GM12878 (cell line): ENCODE measurements at regions of chr12 and their contacts with region 1.

Region 1: DNA sequence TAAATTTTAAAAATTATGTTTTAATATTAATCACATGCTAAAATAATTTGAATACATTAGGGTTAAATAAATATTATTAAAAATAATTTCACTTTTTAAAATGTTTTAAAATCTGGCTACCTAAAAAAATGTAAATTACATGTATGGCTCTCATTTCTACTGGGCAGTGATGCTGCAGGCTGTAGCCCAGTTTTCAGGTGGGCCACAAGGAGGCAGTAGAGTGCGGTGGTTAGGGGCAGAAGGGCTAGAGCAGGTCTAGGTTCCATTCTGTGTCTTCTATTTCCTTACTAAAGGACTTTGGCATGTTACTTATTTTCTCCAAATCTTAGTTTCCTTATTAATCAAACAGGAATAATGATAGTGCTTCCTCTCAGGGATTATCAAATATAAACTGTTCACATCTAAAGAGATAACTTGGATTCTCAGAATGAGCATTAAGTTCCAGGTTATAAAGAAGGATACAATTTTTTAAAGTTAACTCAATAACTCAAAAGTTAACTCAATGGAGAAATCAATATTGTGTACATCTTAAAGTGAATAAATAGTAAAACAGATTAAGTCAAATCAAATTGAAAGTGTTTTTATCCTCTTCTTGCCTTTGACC is 54.9 kb upstream of the OVCH1 start:
- DNase-seq: no peak
- ATAC-seq: peak; percentile 98
- H3K4me3 ChIP-seq: no peak overlapping the region
- H3K27ac ChIP-seq: no peak overlapping the region
- H3K4me1 ChIP-seq: no peaks in the 10 kb centered on the region
- H3K27me3 ChIP-seq: no peaks in the 10 kb centered on the region
- CTCF ChIP-seq: peak; percentile 84 to 90 (median 87)
- EP300 ChIP-seq: no peak
- POLR2A ChIP-seq: no peak
- RAD21 ChIP-seq: peak; percentile 79

Region 2: GRCh38 chr12:29350080-29350479 is 202.3 kb before region 1 on chr12:
- CTCF ChIA-PET with region 1: no interaction called
- POLR2A ChIA-PET with region 1: no interaction called
- RAD21 ChIA-PET with region 1: no interaction called
- SMC1A ChIA-PET with region 1: no interaction called
- in situ Hi-C with region 1: no loop called
- intact Hi-C with region 1: no loop called
- DNase-seq: no peak
- ATAC-seq: no peak
- H3K4me3 ChIP-seq: no peak overlapping the region
- H3K27ac ChIP-seq: no peak overlapping the region
- H3K4me1 ChIP-seq: no peaks in the 10 kb centered on the region
- H3K27me3 ChIP-seq: no peaks in the 10 kb centered on the region
- CTCF ChIP-seq: no peak
- EP300 ChIP-seq: no peak
- POLR2A ChIP-seq: no peak
- RAD21 ChIP-seq: no peak

Region 3: GRCh38 chr12:29519585-29520182 is 32.7 kb before region 1 on chr12:
- CTCF ChIA-PET with region 1: interaction called, 19 read pairs
- POLR2A ChIA-PET with region 1: no interaction called
- RAD21 ChIA-PET with region 1: interaction called, 10 read pairs
- SMC1A ChIA-PET with region 1: interaction called, 38 read pairs
- in situ Hi-C with region 1: no loop called
- intact Hi-C with region 1: no loop called
- DNase-seq: no peak
- ATAC-seq: peak; percentile 71
- H3K4me3 ChIP-seq: no peak overlapping the region
- H3K27ac ChIP-seq: no peak overlapping the region
- H3K4me1 ChIP-seq: no peaks in the 10 kb centered on the region
- H3K27me3 ChIP-seq: no peaks in the 10 kb centered on the region
- CTCF ChIP-seq: peak; percentile 40 to 66 (median 52); a peak in 5 of 6 replicates
- EP300 ChIP-seq: no peak
- POLR2A ChIP-seq: no peak
- RAD21 ChIP-seq: peak; percentile 71

Region 4: DNA sequence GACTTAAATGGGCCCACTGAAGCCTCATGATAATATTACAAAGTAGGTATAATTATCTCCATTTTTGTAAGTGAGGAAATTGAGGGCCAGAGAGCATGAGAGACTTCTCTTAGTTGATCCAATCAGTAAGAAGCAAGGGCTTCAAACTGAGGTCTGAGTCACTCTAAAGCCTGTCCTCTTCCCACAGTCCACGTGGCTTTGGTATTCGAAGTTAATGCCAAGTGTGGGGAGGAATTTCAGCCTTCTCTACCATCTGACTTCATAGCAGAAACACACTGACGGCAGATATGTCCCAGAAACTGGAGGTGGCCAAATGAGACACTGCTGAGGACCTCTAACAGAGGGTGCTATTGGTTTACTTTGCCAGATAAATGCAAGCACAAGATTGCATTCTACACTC is 59.5 kb after region 1 on chr12:
- CTCF ChIA-PET with region 1: interaction called, 3 read pairs
- POLR2A ChIA-PET with region 1: no interaction called
- RAD21 ChIA-PET with region 1: interaction called, 13 read pairs
- SMC1A ChIA-PET with region 1: interaction called, 3 read pairs
- in situ Hi-C with region 1: no loop called
- intact Hi-C with region 1: no loop called
- DNase-seq: no peak
- ATAC-seq: no peak
- H3K4me3 ChIP-seq: no peak overlapping the region
- H3K27ac ChIP-seq: no peak overlapping the region
- H3K4me1 ChIP-seq: no peaks in the 10 kb centered on the region
- H3K27me3 ChIP-seq: no peaks in the 10 kb centered on the region
- CTCF ChIP-seq: no peak
- EP300 ChIP-seq: no peak
- POLR2A ChIP-seq: no peak
- RAD21 ChIP-seq: no peak

Region 5: DNA sequence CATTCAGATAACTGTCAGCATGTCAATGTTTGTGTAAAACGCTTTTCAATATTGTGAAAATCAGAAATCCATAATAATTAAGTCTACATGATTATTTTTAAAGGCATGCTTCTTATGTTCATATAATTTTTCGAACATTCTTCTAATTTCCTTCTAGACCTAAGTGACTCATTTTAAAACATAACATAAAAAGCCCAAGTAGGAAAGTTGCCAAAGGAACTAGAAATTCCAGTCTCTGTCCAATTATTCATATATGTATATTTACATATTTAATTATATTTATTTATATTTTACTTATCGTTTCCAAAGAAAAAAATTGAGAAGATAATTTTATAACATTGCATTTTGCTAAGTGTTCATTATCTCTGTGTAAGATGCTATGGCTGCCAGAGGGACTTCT is 120.9 kb after region 1 on chr12:
- CTCF ChIA-PET with region 1: no interaction called
- POLR2A ChIA-PET with region 1: no interaction called
- RAD21 ChIA-PET with region 1: interaction called, 3 read pairs
- SMC1A ChIA-PET with region 1: interaction called, 17 read pairs
- in situ Hi-C with region 1: no loop called
- intact Hi-C with region 1: no loop called
- DNase-seq: no peak
- ATAC-seq: no peak
- H3K4me3 ChIP-seq: no peak overlapping the region
- H3K27ac ChIP-seq: no peak overlapping the region
- H3K4me1 ChIP-seq: no peaks in the 10 kb centered on the region
- H3K27me3 ChIP-seq: no peaks in the 10 kb centered on the region
- CTCF ChIP-seq: no peak
- EP300 ChIP-seq: no peak
- POLR2A ChIP-seq: no peak
- RAD21 ChIP-seq: no peak

Region 6: DNA sequence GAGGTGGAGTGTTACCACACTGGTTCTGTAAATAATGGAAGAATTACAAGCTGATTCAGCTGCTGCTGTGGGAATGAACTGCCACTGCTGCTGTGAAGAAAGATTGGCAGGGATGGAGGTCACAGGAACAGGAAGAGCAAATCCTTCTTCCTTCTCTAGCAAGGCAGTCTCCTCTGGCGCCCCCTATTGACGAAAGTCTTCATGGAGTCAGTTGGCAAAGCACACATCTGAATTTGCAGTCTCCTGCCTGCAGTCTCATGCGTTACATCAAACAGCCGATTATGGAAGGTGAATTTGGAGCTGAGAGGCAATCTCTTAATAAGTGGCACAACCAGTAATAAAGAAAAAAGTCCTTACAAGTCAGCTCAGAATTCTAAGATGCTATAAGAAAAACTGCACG is 337.3 kb after region 1 on chr12:
- CTCF ChIA-PET with region 1: interaction called, 43 read pairs
- POLR2A ChIA-PET with region 1: no interaction called
- RAD21 ChIA-PET with region 1: interaction called, 13 read pairs
- SMC1A ChIA-PET with region 1: interaction called, 17 read pairs
- in situ Hi-C with region 1: no loop called
- intact Hi-C with region 1: loop called (anchors 5 kb)
- DNase-seq: no peak
- ATAC-seq: no peak
- H3K4me3 ChIP-seq: no peak overlapping the region
- H3K27ac ChIP-seq: no peak overlapping the region
- H3K4me1 ChIP-seq: no peaks in the 10 kb centered on the region
- H3K27me3 ChIP-seq: no peaks in the 10 kb centered on the region
- CTCF ChIP-seq: peak; percentile 10 to 44 (median 22); a peak in 3 of 6 replicates
- EP300 ChIP-seq: no peak
- POLR2A ChIP-seq: no peak
- RAD21 ChIP-seq: 0 out of 2 replicates have a peak, but pooled peaks have one; percentile 20

Region 7: DNA sequence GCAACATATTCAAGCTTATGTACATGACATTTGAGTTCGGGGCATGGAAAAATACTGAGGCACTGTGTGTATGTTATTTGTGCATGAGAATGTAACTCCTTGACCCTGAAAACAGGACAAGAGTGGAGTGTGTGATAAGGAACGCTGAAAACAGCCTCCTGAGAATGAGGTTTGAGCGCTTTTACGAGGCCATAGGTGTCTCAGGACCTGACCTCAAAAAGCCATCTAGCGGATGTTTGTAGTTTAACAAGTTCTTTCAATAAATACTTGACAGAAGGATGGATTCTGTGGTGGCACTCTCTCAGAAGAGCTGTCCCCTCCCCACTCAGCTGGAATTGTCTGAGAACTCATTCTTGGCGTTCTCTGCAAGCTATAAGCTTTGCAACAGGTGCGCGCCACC is 581.8 kb after region 1 on chr12:
- CTCF ChIA-PET with region 1: interaction called, 9 read pairs
- POLR2A ChIA-PET with region 1: no interaction called
- RAD21 ChIA-PET with region 1: interaction called, 4 read pairs
- SMC1A ChIA-PET with region 1: interaction called, 9 read pairs
- in situ Hi-C with region 1: no loop called
- intact Hi-C with region 1: loop called (anchors 1 kb)
- DNase-seq: no peak
- ATAC-seq: peak; percentile 77
- H3K4me3 ChIP-seq: no peak overlapping the region
- H3K27ac ChIP-seq: no peak overlapping the region
- H3K4me1 ChIP-seq: no peaks in the 10 kb centered on the region
- H3K27me3 ChIP-seq: no peaks in the 10 kb centered on the region
- CTCF ChIP-seq: peak in 2 of 3 experiments; percentile 24 to 33; a peak in 3 of 6 replicates
- EP300 ChIP-seq: no peak
- POLR2A ChIP-seq: no peak
- RAD21 ChIP-seq: no peak

Region 8: GRCh38 chr12:30806989-30807694 is 1254.7 kb after region 1 on chr12:
- CTCF ChIA-PET with region 1: interaction called, 9 read pairs
- POLR2A ChIA-PET with region 1: no interaction called
- RAD21 ChIA-PET with region 1: interaction called, 3 read pairs
- SMC1A ChIA-PET with region 1: interaction called, 3 read pairs
- in situ Hi-C with region 1: loop called (anchors 10 kb)
- intact Hi-C with region 1: loop called (anchors 10 kb)
- DNase-seq: peak; percentile 21
- ATAC-seq: peak; percentile 86
- H3K4me3 ChIP-seq: no peak overlapping the region
- H3K27ac ChIP-seq: no peak overlapping the region
- H3K4me1 ChIP-seq: no peaks in the 10 kb centered on the region
- H3K27me3 ChIP-seq: no peaks in the 10 kb centered on the region
- CTCF ChIP-seq: peak; percentile 68 to 80 (median 77)
- EP300 ChIP-seq: no peak
- POLR2A ChIP-seq: no peak
- RAD21 ChIP-seq: peak; percentile 95